ENCODE measurements at regions of chr4 and their contacts with region 1.

Region 1: GRCh38 chr4:143163618-143164017 is 21.1 kb upstream of the USP38 start:
- DNase-seq: no peak
- ATAC-seq: no peak
- H3K4me3 Mint-ChIP-seq: no peak overlapping the region
- H3K27ac Mint-ChIP-seq: no peak overlapping the region
- H3K4me1 Mint-ChIP-seq: no peaks in the 10 kb centered on the region
- H3K27me3 Mint-ChIP-seq: no peaks in the 10 kb centered on the region
- CTCF ChIP-seq: no peak

Region 2: DNA sequence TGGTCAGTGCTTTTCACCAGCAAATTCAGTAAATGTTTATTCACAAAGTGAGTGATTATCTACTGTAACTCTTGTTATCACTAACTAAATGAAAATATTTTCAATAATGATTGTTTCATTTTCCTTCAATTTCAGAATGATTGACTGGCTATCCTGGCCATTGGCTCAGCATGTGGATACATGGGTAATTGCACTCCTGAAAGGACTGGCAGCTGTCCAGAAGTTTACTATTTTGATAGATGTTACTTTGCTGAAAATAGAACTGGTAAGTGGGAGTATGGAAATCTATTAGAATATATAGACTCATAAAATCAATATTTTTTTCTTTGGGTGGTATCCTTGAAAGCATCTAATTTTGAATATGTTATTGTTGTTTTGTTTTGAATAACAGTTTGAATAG is 32.0 kb after region 1 on chr4:
- CTCF ChIA-PET with region 1: no interaction called
- POLR2A ChIA-PET with region 1: no interaction called
- intact Hi-C with region 1: loop called (anchors 1 kb)
- DNase-seq: no peak
- ATAC-seq: no peak
- H3K4me3 Mint-ChIP-seq: no peak overlapping the region
- H3K27ac Mint-ChIP-seq: no peak overlapping the region
- H3K4me1 Mint-ChIP-seq: peaks cover 21% of the 10 kb centered on the region
- H3K27me3 Mint-ChIP-seq: no peaks in the 10 kb centered on the region
- CTCF ChIP-seq: no peak

Measured in activated B cell treated with CpG ODN at 0.5 μM for 24 hours (primary cell).